GM10248 (cell line): ENCODE measurements at regions of chr11 and their contacts with region 1.

Region 1: DNA sequence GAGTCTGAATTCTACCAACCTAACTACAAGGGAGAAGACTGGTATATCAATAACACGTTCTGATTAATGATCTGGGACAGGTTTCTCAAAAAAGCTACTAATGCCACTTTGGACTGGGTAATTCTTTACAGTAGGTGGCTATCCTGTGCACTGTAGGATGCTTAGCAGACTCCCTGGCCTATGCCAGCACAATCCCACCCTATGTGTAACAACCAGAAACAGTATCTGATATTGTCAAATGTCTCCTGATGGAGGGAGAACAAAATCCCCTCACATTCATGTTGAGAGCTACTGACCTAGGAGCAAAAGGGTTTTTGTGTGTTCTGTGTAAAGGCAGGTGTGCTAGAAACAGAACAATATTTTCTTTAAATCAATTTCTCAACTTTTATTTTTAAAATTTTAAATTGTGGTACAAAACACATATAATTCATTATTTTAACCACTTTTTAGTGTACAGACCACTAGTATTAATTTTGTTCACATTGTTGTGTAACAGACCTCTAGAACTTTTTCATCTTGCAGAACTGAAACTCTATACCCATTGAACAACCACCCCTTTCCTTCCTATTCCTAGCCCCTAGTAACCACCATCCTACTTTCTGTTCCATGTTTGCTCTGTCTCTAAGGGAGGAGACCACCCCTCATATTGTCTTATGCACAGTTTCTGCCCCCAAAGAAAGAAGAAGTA is 2.1 kb upstream of the MS4A6A start:
- DNase-seq: no peak
- CTCF ChIP-seq: no peak

Region 2: GRCh38 chr11:60170566-60170965 is 14.4 kb before region 1 on chr11:
- CTCF ChIA-PET with region 1: interaction called, 10 read pairs
- POLR2A ChIA-PET with region 1: no interaction called
- DNase-seq: no peak
- CTCF ChIP-seq: no peak